A673 (cell line): ENCODE measurements at regions of chr4 and their contacts with region 1.

Region 1: GRCh38 chr4:81844717-81845116 is 373.0 kb upstream of the RASGEF1B start:
- DNase-seq: peak; percentile 75
- H3K4me3 ChIP-seq: no peak overlapping the region
- H3K27ac ChIP-seq: no peak overlapping the region
- H3K4me1 ChIP-seq: peaks cover 6% of the 10 kb centered on the region
- H3K27me3 ChIP-seq: no peaks in the 10 kb centered on the region
- CTCF ChIP-seq: peak; percentile 65

Region 2: DNA sequence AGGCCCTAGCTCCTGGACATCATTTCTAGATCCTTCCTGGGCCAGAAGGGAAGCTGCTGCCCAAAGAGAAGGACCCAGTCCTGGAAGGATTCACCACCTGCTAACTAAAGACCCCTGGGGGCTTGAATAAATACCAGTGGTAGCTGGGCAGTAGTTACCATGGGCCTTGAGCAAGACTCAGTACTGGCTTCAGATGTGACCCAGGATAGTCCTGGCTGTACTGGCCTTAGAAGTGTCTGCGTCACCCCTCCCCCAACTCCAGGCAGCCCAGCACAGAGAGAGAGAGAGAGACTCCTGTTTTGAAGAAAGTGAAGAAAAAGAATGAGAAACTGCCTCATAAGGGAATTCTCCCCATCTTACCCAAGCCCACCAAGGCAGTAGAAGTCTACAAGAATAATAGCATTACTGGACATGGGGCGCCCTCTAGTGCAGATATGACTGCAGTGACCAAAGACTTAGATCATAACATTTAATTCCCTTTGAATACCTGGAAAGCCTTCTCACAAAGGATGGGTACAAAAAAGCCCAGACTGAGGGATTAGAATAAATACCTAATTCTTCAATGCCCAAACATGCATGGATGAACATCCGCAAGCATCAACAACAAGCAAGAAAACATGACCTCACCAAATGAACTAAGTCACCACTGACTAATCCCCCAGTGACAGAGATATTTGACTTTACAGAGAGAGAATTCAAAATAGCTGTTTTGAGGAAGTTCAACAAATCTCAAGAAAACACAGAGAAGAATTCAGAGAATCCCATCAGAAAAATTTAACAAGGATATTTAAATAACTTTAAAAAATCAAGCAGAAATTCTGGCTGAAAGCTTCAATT is 357.3 kb after region 1 on chr4:
- CTCF ChIA-PET with region 1: interaction called, 4 read pairs
- POLR2A ChIA-PET with region 1: no interaction called
- intact Hi-C with region 1: loop called (anchors 1 kb)
- DNase-seq: peak; percentile 80
- H3K4me3 ChIP-seq: no peak overlapping the region
- H3K27ac ChIP-seq: no peak overlapping the region
- H3K4me1 ChIP-seq: no peaks in the 10 kb centered on the region
- H3K27me3 ChIP-seq: no peaks in the 10 kb centered on the region
- CTCF ChIP-seq: peak; percentile 70